GM12878 (cell line): ENCODE measurements at regions of chr13 and their contacts with region 1.

Region 1: GRCh38 chr13:73967397-73968165 is 166.6 kb downstream of the KLF12 start:
- DNase-seq: peak; percentile 89
- ATAC-seq: peak; percentile 99
- H3K4me3 ChIP-seq: no peak overlapping the region
- H3K27ac ChIP-seq: no peak overlapping the region; the same call in 1 of the 2 replicates
- H3K4me1 ChIP-seq: peaks cover 17% of the 10 kb centered on the region
- H3K27me3 ChIP-seq: no peaks in the 10 kb centered on the region
- CTCF ChIP-seq: no peak
- EP300 ChIP-seq: no peak
- POLR2A ChIP-seq: no peak
- RAD21 ChIP-seq: 0 out of 2 replicates have a peak, but pooled peaks have one; percentile 1

Region 2: GRCh38 chr13:73991884-73992283 is 24.3 kb after region 1 on chr13:
- CTCF ChIA-PET with region 1: interaction called, 5 read pairs
- POLR2A ChIA-PET with region 1: interaction called, 5 read pairs
- RAD21 ChIA-PET with region 1: interaction called, 5 read pairs
- SMC1A ChIA-PET with region 1: interaction called, 22 read pairs
- in situ Hi-C with region 1: no loop called
- intact Hi-C with region 1: no loop called
- DNase-seq: no peak
- ATAC-seq: peak; percentile 18; the same call in 1 of the 3 replicates
- H3K4me3 ChIP-seq: no peak overlapping the region
- H3K27ac ChIP-seq: 0 out of 2 replicates have a peak overlapping the region, but pooled peaks have one; percentile 15
- H3K4me1 ChIP-seq: 0 out of 2 replicates have a peak, but pooled peaks cover 5% of the 10 kb centered on the region
- H3K27me3 ChIP-seq: no peaks in the 10 kb centered on the region
- CTCF ChIP-seq: no peak
- EP300 ChIP-seq: no peak
- POLR2A ChIP-seq: no peak
- RAD21 ChIP-seq: no peak

Region 3: DNA sequence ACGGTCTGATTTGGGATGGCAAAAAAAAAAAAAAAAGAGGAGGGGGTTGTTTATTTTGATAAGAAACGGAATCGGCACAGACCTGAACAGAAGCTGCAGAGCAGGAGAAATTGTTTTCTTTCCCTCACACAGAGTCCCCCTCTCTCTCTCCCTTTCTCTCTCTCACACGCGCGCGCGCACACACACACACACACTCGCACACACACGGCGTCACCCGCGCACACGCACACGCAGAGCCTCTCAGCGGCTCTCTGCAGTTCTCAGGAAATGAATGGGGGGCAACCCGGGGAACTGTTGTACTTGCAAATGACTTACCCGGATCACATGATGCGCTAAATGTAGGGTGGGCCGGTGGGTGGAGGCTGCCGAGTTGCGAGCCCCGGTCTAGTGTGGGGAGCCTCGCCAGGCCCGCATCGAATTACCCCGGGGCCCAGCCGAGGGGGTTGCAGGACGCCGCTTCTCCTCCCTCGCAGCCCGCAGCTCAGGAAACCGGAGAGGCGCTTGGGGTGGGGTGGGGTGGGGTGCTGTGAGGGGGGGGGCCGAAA is 166.1 kb after region 1 on chr13:
- CTCF ChIA-PET with region 1: no interaction called
- POLR2A ChIA-PET with region 1: interaction called, 3 read pairs
- RAD21 ChIA-PET with region 1: no interaction called
- SMC1A ChIA-PET with region 1: interaction called, 3 read pairs
- in situ Hi-C with region 1: no loop called
- intact Hi-C with region 1: loop called (anchors 10 kb)
- DNase-seq: peak; percentile 64
- ATAC-seq: peak; percentile 70
- H3K4me3 ChIP-seq: peak overlapping the region; percentile 82
- H3K27ac ChIP-seq: peak overlapping the region; percentile 45
- H3K4me1 ChIP-seq: peaks cover 5% of the 10 kb centered on the region; the same call in 1 of the 2 replicates
- H3K27me3 ChIP-seq: no peaks in the 10 kb centered on the region
- CTCF ChIP-seq: no peak
- EP300 ChIP-seq: peak in 1 of 2 experiments; percentile 25; a peak in 1 of 4 replicates
- POLR2A ChIP-seq: no peak; the same call in none of the 2 replicates
- RAD21 ChIP-seq: 0 out of 2 replicates have a peak, but pooled peaks have one; percentile 1